ENCODE measurements at regions of chr2 and their contacts with region 1.

Region 1: GRCh38 chr2:240560480-240561326 is 546 bp downstream of the DUSP28 start:
- DNase-seq: peak; percentile 98 to 100 (median 99)
- ATAC-seq: peak; percentile 79
- H3K4me3 ChIP-seq: peak overlapping the region; percentile 82
- H3K4me3 Mint-ChIP-seq: peak overlapping the region; percentile 81 to 96 (median 86)
- H3K27ac ChIP-seq: peak overlapping the region; percentile 93
- H3K27ac Mint-ChIP-seq: peak overlapping the region; percentile 85 to 97 (median 90)
- H3K4me1 ChIP-seq: peaks cover 72 to 74% of the 10 kb centered on the region in 2 donors
- H3K4me1 Mint-ChIP-seq: peaks cover 53 to 79% (median 76%) of the 10 kb centered on the region in 7 donors
- H3K27me3 ChIP-seq: no peaks in the 10 kb centered on the region
- H3K27me3 Mint-ChIP-seq: no peaks in the 10 kb centered on the region

Region 2: GRCh38 chr2:240232961-240233893 is 327.5 kb before region 1 on chr2:
- CTCF ChIA-PET with region 1: no interaction called
- POLR2A ChIA-PET with region 1: no interaction called
- intact Hi-C with region 1: loop called in 1 of 2 experiments (anchors 2 kb)
- DNase-seq: peak; percentile 48 to 75 (median 69)
- ATAC-seq: peak; percentile 84
- H3K4me3 ChIP-seq: no peak overlapping the region
- H3K4me3 Mint-ChIP-seq: peak overlapping the region in 6 of 10 donors; percentile 21 to 74 (median 56)
- H3K27ac ChIP-seq: peak overlapping the region; percentile 13
- H3K27ac Mint-ChIP-seq: no peak overlapping the region
- H3K4me1 ChIP-seq: no peaks in the 10 kb centered on the region
- H3K4me1 Mint-ChIP-seq: peaks cover 0 to 14% (median 0%) of the 10 kb centered on the region in 7 donors
- H3K27me3 ChIP-seq: no peaks in the 10 kb centered on the region
- H3K27me3 Mint-ChIP-seq: peaks cover 0 to 20% (median 11%) of the 10 kb centered on the region in 5 donors

Region 3: GRCh38 chr2:240491483-240491882 is 69.2 kb before region 1 on chr2:
- CTCF ChIA-PET with region 1: no interaction called
- POLR2A ChIA-PET with region 1: no interaction called
- intact Hi-C with region 1: no loop called
- DNase-seq: no peak
- ATAC-seq: no peak
- H3K4me3 ChIP-seq: no peak overlapping the region
- H3K4me3 Mint-ChIP-seq: no peak overlapping the region
- H3K27ac ChIP-seq: no peak overlapping the region
- H3K27ac Mint-ChIP-seq: no peak overlapping the region
- H3K4me1 ChIP-seq: no peaks in the 10 kb centered on the region
- H3K4me1 Mint-ChIP-seq: no peaks in the 10 kb centered on the region
- H3K27me3 ChIP-seq: no peaks in the 10 kb centered on the region
- H3K27me3 Mint-ChIP-seq: no peaks in the 10 kb centered on the region

Region 4: GRCh38 chr2:240586198-240586918 is 25.7 kb after region 1 on chr2 and contains the start of gene CAPN10:
- CTCF ChIA-PET with region 1: interaction called, 61 read pairs
- POLR2A ChIA-PET with region 1: interaction called, 264 read pairs
- intact Hi-C with region 1: loop called (anchors 1 kb)
- DNase-seq: peak; percentile 93 to 98 (median 97)
- ATAC-seq: peak; percentile 92
- H3K4me3 ChIP-seq: peak within 1 kb of the TSS; percentile 89
- H3K4me3 Mint-ChIP-seq: peak within 1 kb of the TSS; percentile 82 to 97 (median 94)
- H3K27ac ChIP-seq: peak within 1 kb of the TSS; percentile 94
- H3K27ac Mint-ChIP-seq: peak within 1 kb of the TSS; percentile 90 to 97 (median 92)
- H3K4me1 ChIP-seq: peaks cover 30 to 33% of the 10 kb centered on the region in 2 donors
- H3K4me1 Mint-ChIP-seq: peaks cover 31 to 69% (median 56%) of the 10 kb centered on the region in 7 donors
- H3K27me3 ChIP-seq: no peaks in the 10 kb centered on the region
- H3K27me3 Mint-ChIP-seq: no peaks in the 10 kb centered on the region
- total RNA-seq, gene CAPN10: 54.1 to 74.8 (median 64.5) TPM

Region 5: GRCh38 chr2:240596491-240596931 is 35.8 kb after region 1 on chr2:
- CTCF ChIA-PET with region 1: no interaction called
- POLR2A ChIA-PET with region 1: no interaction called
- intact Hi-C with region 1: no loop called
- DNase-seq: peak in 1 of 9 donors; percentile 6
- ATAC-seq: no peak
- H3K4me3 ChIP-seq: no peak overlapping the region
- H3K4me3 Mint-ChIP-seq: no peak overlapping the region
- H3K27ac ChIP-seq: peak overlapping the region; percentile 7
- H3K27ac Mint-ChIP-seq: no peak overlapping the region
- H3K4me1 ChIP-seq: no peaks in the 10 kb centered on the region
- H3K4me1 Mint-ChIP-seq: peaks cover 0 to 5% (median 2%) of the 10 kb centered on the region in 7 donors
- H3K27me3 ChIP-seq: no peaks in the 10 kb centered on the region
- H3K27me3 Mint-ChIP-seq: no peaks in the 10 kb centered on the region

Region 6: DNA sequence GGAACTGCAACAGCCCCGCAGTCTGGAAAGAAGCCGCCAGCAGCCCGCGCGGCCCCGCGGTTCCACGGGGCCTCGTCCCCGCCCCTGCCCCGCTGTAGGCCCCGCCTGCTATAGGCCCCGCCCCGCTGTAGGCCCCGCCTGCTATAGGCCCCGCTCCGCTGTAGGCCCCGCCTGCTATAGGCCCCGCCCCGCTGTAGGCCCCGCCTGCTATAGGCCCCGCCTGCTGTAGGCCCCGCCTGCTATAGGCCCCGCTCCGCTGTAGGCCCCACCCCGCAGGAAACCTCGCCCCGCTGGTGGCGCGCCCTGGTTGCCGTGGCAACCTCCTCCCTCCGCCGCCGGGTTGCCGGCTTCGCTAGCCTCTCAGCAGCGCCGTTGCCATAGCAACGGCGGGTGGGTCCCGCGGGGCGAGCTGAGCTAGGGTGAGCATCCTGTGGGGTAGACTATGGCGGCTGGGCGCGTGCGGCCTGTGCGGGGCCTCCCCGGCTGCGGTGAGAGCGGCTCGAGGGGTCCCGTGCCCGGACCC is 271.6 kb after region 1 on chr2:
- CTCF ChIA-PET with region 1: no interaction called
- POLR2A ChIA-PET with region 1: interaction called, 5 read pairs
- intact Hi-C with region 1: loop called (anchors 1 kb)
- DNase-seq: peak; percentile 93 to 100 (median 99)
- ATAC-seq: peak; percentile 96
- H3K4me3 ChIP-seq: peak overlapping the region; percentile 32
- H3K4me3 Mint-ChIP-seq: peak overlapping the region in 8 of 10 donors; percentile 56 to 78 (median 71)
- H3K27ac ChIP-seq: no peak overlapping the region
- H3K27ac Mint-ChIP-seq: peak overlapping the region in 4 of 9 donors; percentile 22 to 88 (median 74)
- H3K4me1 ChIP-seq: peaks cover 11 to 14% of the 10 kb centered on the region in 2 donors
- H3K4me1 Mint-ChIP-seq: peaks cover 0 to 7% (median 0%) of the 10 kb centered on the region in 7 donors
- H3K27me3 ChIP-seq: no peaks in the 10 kb centered on the region
- H3K27me3 Mint-ChIP-seq: peaks cover 4 to 30% (median 19%) of the 10 kb centered on the region in 5 donors

Region 7: GRCh38 chr2:241355983-241356870 is 795.5 kb after region 1 on chr2 and contains the start of gene FARP2:
- CTCF ChIA-PET with region 1: no interaction called
- POLR2A ChIA-PET with region 1: no interaction called
- intact Hi-C with region 1: loop called in 1 of 2 experiments (anchors 1 kb)
- DNase-seq: peak; percentile 91 to 99 (median 97)
- ATAC-seq: peak; percentile 93
- H3K4me3 ChIP-seq: peak within 1 kb of the TSS; percentile 54
- H3K4me3 Mint-ChIP-seq: peak within 1 kb of the TSS; percentile 75 to 92 (median 85)
- H3K27ac ChIP-seq: peak within 1 kb of the TSS; percentile 72
- H3K27ac Mint-ChIP-seq: peak within 1 kb of the TSS in 8 of 9 donors; percentile 80 to 95 (median 90)
- H3K4me1 ChIP-seq: peaks cover 6 to 7% of the 10 kb centered on the region in 2 donors
- H3K4me1 Mint-ChIP-seq: peaks cover 5 to 34% (median 19%) of the 10 kb centered on the region in 7 donors
- H3K27me3 ChIP-seq: no peaks in the 10 kb centered on the region
- H3K27me3 Mint-ChIP-seq: no peaks in the 10 kb centered on the region
- total RNA-seq, gene FARP2: 12.4 to 31.0 (median 22.1) TPM

Region 8: GRCh38 chr2:241734467-241735208 is 1173.9 kb after region 1 on chr2 and contains the start of gene D2HGDH:
- CTCF ChIA-PET with region 1: no interaction called
- POLR2A ChIA-PET with region 1: no interaction called
- intact Hi-C with region 1: loop called in 1 of 2 experiments (anchors 10 kb)
- DNase-seq: peak; percentile 85 to 99 (median 91)
- ATAC-seq: peak; percentile 98
- H3K4me3 ChIP-seq: peak within 1 kb of the TSS; percentile 88
- H3K4me3 Mint-ChIP-seq: peak within 1 kb of the TSS; percentile 79 to 89 (median 84)
- H3K27ac ChIP-seq: peak within 1 kb of the TSS; percentile 75
- H3K27ac Mint-ChIP-seq: peak within 1 kb of the TSS in 8 of 9 donors; percentile 40 to 79 (median 72)
- H3K4me1 ChIP-seq: peaks cover 9% of the 10 kb centered on the region in 2 donors
- H3K4me1 Mint-ChIP-seq: peaks cover 9 to 54% (median 43%) of the 10 kb centered on the region in 7 donors
- H3K27me3 ChIP-seq: no peaks in the 10 kb centered on the region
- H3K27me3 Mint-ChIP-seq: no peaks in the 10 kb centered on the region
- total RNA-seq, gene D2HGDH: 32.5 to 49.8 (median 41.1) TPM